Caco-2 (cell line): ENCODE measurements at regions of chr18 and their contacts with region 1.

Region 1: DNA sequence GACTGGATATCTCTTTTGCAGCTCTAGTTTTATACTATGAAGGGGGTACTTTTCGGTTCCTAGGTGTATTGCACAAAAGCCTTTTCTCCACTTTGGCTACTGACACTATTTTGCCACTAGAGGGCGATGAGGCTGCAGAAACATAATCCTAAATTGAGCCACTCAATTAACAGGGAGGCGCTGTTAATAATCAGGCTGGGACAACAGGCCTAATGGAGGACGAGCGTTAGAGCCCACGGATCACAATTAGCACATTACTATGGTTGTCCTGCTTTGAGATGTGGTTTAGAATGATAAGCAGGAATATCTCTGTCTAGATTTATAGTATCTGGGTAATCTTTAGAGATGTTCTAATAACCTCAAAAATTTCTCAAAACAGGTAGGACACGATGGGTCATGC is 62.2 kb upstream of the PMAIP1 start:
- DNase-seq: peak; percentile 31 to 33
- H3K4me3 ChIP-seq: no peak overlapping the region
- H3K4me3 Mint-ChIP-seq: no peak overlapping the region
- H3K27ac Mint-ChIP-seq: no peak overlapping the region
- H3K4me1 ChIP-seq: no peaks in the 10 kb centered on the region
- H3K4me1 Mint-ChIP-seq: no peaks in the 10 kb centered on the region
- H3K27me3 ChIP-seq: no peaks in the 10 kb centered on the region
- H3K27me3 Mint-ChIP-seq: peaks cover 4% of the 10 kb centered on the region
- CTCF ChIP-seq: peak; percentile 38 to 46

Region 2: DNA sequence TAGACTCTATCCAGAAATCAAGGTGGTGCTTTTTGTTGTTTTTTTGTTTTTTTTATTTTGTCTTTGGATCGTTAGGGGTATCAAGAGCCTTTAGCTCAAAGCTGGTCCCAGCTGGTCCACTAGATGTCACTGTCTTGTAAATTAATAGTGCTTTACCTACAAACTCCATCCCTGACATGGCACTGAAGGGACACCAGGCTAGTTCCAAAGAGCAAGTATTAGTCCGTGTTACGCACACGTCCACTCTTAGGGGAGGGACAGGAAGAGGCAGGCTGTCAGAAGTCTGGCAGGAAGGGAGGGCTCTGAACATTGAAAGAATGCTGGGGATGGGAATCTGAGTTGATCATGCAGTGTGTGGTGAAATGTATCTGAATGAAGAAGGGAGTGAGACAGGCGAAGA is 54.4 kb before region 1 on chr18:
- CTCF ChIA-PET with region 1: no interaction called
- POLR2A ChIA-PET with region 1: no interaction called
- intact Hi-C with region 1: no loop called
- DNase-seq: peak; percentile 22 to 27
- H3K4me3 ChIP-seq: no peak overlapping the region
- H3K4me3 Mint-ChIP-seq: no peak overlapping the region
- H3K27ac Mint-ChIP-seq: no peak overlapping the region
- H3K4me1 ChIP-seq: no peaks in the 10 kb centered on the region
- H3K4me1 Mint-ChIP-seq: peaks cover 6% of the 10 kb centered on the region
- H3K27me3 ChIP-seq: no peaks in the 10 kb centered on the region
- H3K27me3 Mint-ChIP-seq: peaks cover 6% of the 10 kb centered on the region
- CTCF ChIP-seq: peak; percentile 12 to 22

Region 3: DNA sequence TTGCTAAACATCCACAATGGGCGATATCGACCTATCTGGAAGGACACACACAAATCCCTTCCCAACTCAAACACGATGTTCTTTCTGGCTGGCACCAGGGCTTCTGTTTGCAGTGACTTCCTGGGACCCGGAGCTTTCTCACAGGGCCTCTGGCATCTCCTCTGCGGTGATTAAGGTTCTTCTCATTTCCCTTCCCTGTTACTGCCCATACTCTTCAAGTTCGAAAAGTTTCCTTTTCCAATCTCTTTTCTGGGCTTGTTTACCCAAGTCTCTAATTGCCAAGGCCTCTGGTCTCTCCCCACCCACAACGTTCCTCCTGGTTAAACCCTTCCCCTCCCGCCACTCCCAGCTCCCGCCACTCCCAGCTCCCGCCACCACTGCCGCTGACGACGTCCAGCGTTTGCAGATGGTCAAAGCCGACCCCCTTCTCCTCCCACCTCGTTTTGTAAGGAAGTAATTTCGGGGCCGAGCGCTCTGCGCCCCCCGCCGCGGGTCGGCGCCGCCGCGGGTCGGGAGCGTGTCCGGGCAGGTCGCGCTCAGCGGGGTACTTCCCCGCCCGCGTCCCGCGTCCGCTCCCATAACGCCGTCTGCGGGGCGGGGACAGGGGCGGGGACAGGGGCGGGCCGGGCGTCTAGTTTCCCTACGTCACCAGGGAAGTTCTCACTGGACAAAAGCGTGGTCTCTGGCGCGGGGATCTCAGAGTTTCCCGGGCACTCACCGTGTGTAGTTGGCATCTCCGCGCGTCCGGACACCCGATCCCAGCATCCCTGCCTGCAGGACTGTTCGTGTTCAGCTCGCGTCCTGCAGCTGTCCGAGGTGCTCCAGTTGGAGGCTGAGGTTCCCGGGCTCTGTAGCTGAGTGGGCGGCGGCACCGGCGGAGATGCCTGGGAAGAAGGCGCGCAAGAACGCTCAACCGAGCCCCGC is 62.0 kb after region 1 on chr18 and contains the start of gene PMAIP1:
- CTCF ChIA-PET with region 1: no interaction called
- POLR2A ChIA-PET with region 1: interaction called, 4 read pairs
- intact Hi-C with region 1: loop called (anchors 1 kb)
- DNase-seq: peak; percentile 70 to 72
- H3K4me3 ChIP-seq: peak within 1 kb of the TSS; percentile 54
- H3K4me3 Mint-ChIP-seq: peak within 1 kb of the TSS; percentile 70
- H3K27ac Mint-ChIP-seq: no peak within 1 kb of the TSS
- H3K4me1 ChIP-seq: no peaks in the 10 kb centered on the region
- H3K4me1 Mint-ChIP-seq: no peaks in the 10 kb centered on the region
- H3K27me3 ChIP-seq: no peaks in the 10 kb centered on the region
- H3K27me3 Mint-ChIP-seq: no peaks in the 10 kb centered on the region
- CTCF ChIP-seq: no peak
- total RNA-seq, gene PMAIP1: 2.3 and 2.4 TPM in 2 replicates

Region 4: GRCh38 chr18:59988098-59988706 is 150.6 kb after region 1 on chr18:
- CTCF ChIA-PET with region 1: no interaction called
- POLR2A ChIA-PET with region 1: no interaction called
- intact Hi-C with region 1: loop called (anchors 10 kb)
- DNase-seq: peak in 1 of 2 experiments; percentile 3
- H3K4me3 ChIP-seq: no peak overlapping the region
- H3K4me3 Mint-ChIP-seq: no peak overlapping the region
- H3K27ac Mint-ChIP-seq: no peak overlapping the region
- H3K4me1 ChIP-seq: no peaks in the 10 kb centered on the region
- H3K4me1 Mint-ChIP-seq: no peaks in the 10 kb centered on the region
- H3K27me3 ChIP-seq: no peaks in the 10 kb centered on the region
- H3K27me3 Mint-ChIP-seq: peaks cover 2% of the 10 kb centered on the region
- CTCF ChIP-seq: peak; percentile 59 to 66

Region 5: GRCh38 chr18:60413944-60414547 is 576.5 kb after region 1 on chr18:
- CTCF ChIA-PET with region 1: no interaction called
- POLR2A ChIA-PET with region 1: no interaction called
- intact Hi-C with region 1: loop called (anchors 5 kb)
- DNase-seq: peak; percentile 9 to 19
- H3K4me3 ChIP-seq: no peak overlapping the region
- H3K4me3 Mint-ChIP-seq: no peak overlapping the region
- H3K27ac Mint-ChIP-seq: no peak overlapping the region
- H3K4me1 ChIP-seq: no peaks in the 10 kb centered on the region
- H3K4me1 Mint-ChIP-seq: no peaks in the 10 kb centered on the region
- H3K27me3 ChIP-seq: no peaks in the 10 kb centered on the region
- H3K27me3 Mint-ChIP-seq: no peaks in the 10 kb centered on the region
- CTCF ChIP-seq: peak; percentile 35 to 41